ENCODE measurements at regions of chr3 and their contacts with region 1.

Region 1: GRCh38 chr3:32334675-32335074 is 57.0 kb upstream of the CMTM7 start:
- DNase-seq: no peak
- H3K4me3 ChIP-seq: no peak overlapping the region
- H3K27ac ChIP-seq: no peak overlapping the region
- H3K4me1 ChIP-seq: no peaks in the 10 kb centered on the region
- H3K27me3 ChIP-seq: no peaks in the 10 kb centered on the region
- CTCF ChIP-seq: no peak
- EP300 ChIP-seq: no peak
- POLR2A ChIP-seq: no peak

Region 2: GRCh38 chr3:32203854-32204253 is 130.8 kb before region 1 on chr3:
- intact Hi-C with region 1: no loop called
- DNase-seq: no peak
- H3K4me3 ChIP-seq: no peak overlapping the region
- H3K27ac ChIP-seq: no peak overlapping the region
- H3K4me1 ChIP-seq: peaks cover 0 to 3% (median 0%) of the 10 kb centered on the region in 4 donors
- H3K27me3 ChIP-seq: no peaks in the 10 kb centered on the region
- CTCF ChIP-seq: no peak
- EP300 ChIP-seq: no peak
- POLR2A ChIP-seq: no peak

Region 3: DNA sequence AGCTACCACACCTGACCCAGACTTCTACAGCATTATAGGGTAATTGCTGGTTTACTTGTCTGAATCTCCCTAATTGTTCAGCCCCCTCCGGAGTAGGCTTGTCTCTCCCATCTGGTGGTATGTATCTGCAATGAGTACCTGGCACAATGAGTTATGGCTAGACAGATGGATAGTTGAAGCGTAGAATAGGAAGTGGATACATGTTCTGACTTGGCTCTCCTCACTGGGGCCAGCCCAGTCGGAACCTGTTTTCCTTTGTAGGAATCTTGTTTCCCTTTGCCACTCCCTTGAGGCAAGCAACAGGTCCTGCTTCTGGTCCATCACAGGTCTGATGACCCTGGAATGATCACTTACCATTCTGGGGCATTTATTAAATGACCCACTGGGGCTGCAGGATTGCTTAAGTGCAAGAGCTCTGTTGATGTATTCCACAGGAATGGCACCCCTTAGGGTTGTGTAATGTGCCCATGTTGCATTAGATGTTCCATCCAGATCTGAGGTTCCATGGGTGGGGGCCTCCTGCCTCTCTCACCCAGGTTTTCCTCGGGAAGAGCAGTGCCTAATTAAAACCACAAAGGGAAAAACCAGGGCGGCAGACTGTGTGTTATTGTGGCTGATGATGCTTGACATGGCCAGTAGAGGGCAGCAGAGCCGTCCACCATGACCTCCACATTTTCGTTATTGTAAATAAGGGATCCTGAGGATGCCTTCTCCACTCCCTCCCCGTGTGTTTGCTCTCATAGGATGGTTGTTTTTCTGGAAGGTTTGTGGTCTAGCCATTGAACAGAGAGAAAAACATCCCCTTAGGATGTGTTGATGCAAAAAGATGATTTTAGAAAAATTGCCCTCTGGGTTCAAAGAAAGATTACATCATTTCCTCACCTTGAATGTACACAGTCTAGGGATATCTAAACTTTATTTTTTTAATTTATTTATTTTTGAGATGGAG is 38.1 kb before region 1 on chr3:
- intact Hi-C with region 1: loop called (anchors 5 kb)
- DNase-seq: peak; percentile 76
- H3K4me3 ChIP-seq: no peak overlapping the region
- H3K27ac ChIP-seq: no peak overlapping the region
- H3K4me1 ChIP-seq: no peaks in the 10 kb centered on the region
- H3K27me3 ChIP-seq: no peaks in the 10 kb centered on the region
- CTCF ChIP-seq: peak; percentile 53 to 92 (median 65)
- EP300 ChIP-seq: no peak
- POLR2A ChIP-seq: no peak

Measured in sigmoid colon (tissue), 7 donors.